ENCODE measurements at regions of chrX and their contacts with region 1.

Region 1: GRCh38 chrX:10265775-10266174 is 109.0 kb downstream of the CLCN4 start:
- DNase-seq: no peak
- H3K4me3 Mint-ChIP-seq: no peak overlapping the region
- H3K27ac Mint-ChIP-seq: no peak overlapping the region
- H3K4me1 Mint-ChIP-seq: no peaks in the 10 kb centered on the region
- H3K27me3 Mint-ChIP-seq: no peaks in the 10 kb centered on the region
- CTCF ChIP-seq: no peak

Region 2: GRCh38 chrX:10280071-10280470 is 14.3 kb after region 1 on chrX:
- CTCF ChIA-PET with region 1: interaction called, 11 read pairs
- intact Hi-C with region 1: no loop called
- DNase-seq: no peak
- H3K4me3 Mint-ChIP-seq: no peak overlapping the region
- H3K27ac Mint-ChIP-seq: no peak overlapping the region
- H3K4me1 Mint-ChIP-seq: no peaks in the 10 kb centered on the region
- H3K27me3 Mint-ChIP-seq: peaks cover 12% of the 10 kb centered on the region
- CTCF ChIP-seq: no peak

Region 3: GRCh38 chrX:10341309-10341708 is 75.5 kb after region 1 on chrX:
- CTCF ChIA-PET with region 1: no interaction called
- intact Hi-C with region 1: no loop called
- DNase-seq: no peak
- H3K4me3 Mint-ChIP-seq: no peak overlapping the region
- H3K27ac Mint-ChIP-seq: no peak overlapping the region
- H3K4me1 Mint-ChIP-seq: no peaks in the 10 kb centered on the region
- H3K27me3 Mint-ChIP-seq: no peaks in the 10 kb centered on the region
- CTCF ChIP-seq: no peak

Region 4: GRCh38 chrX:10714531-10714930 is 448.8 kb after region 1 on chrX:
- CTCF ChIA-PET with region 1: no interaction called
- intact Hi-C with region 1: no loop called
- DNase-seq: no peak
- H3K4me3 Mint-ChIP-seq: no peak overlapping the region
- H3K27ac Mint-ChIP-seq: no peak overlapping the region
- H3K4me1 Mint-ChIP-seq: peaks cover 9% of the 10 kb centered on the region
- H3K27me3 Mint-ChIP-seq: no peaks in the 10 kb centered on the region
- CTCF ChIP-seq: no peak

Measured in Calu3 (cell line).